ENCODE measurements at regions of chr13 and their contacts with region 1.

Region 1: DNA sequence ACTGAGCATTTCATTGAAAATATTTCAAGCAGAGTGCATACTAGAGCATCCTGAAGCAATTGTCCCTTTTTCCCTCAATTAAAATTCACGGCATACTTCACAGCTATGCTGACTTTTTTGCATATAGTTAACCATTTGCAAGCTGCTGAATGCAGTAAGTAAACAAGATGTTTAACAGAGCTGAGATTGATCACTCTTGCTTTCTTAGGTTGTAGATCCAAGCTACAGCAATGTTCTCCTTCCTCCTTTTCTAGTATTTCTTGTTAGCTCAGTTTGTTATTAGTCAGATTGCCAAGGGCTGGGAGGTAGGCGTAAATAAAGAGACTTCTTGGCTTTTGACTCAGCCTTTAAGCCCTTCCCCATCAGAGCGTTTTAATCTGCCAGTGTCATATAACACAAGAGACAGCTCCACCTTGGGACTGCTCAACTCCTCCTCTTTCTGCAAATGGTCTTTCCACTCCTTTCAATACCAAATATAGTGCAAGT is at the start of gene SLITRK6:
- DNase-seq: peak; percentile 74
- H3K4me3 ChIP-seq: peak within 1 kb of the TSS; percentile 18 to 20
- H3K27ac ChIP-seq: no peak within 1 kb of the TSS
- H3K4me1 ChIP-seq: no peaks in the 10 kb centered on the region
- H3K27me3 ChIP-seq: no peaks in the 10 kb centered on the region
- CTCF ChIP-seq: peak in 2 of 4 experiments; percentile 20 to 41
- POLR2A ChIP-seq: no peak
- total RNA-seq, gene SLITRK6: 2.6 to 7.6 TPM

Region 2: DNA sequence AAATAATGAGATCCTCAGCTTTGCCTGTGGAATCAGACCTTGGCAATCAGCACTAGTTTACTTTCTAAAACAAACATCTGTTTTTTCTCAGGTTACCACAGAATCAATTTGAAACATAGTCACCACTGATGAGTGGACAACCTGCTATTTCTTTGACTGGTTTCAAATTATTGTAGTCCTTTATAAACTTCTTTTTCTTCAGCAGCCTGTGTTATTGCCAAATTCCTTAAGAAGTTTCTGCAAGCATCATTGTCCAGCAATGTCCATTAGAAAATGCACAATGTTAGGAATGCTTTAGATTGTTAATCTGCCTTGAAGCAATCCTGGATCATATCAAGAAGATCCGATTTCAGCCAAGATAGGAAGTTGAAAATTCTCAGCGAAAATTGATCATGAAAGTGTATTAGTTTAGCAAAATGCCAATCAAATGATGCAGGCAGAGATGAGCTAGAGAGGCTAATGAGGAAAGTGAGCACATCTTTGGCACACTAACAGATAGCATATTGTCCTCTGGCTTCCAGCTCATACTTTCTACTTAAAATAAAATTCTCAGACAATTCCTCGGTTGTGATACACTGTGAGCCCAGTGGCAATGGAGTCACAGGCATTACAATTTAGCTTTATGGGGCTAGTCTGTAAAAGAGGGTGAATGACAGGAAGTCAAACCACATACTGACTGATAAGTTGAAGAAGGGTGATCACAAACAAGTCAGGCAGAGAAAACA is 270.5 kb before region 1 on chr13:
- intact Hi-C with region 1: loop called (anchors 10 kb)
- DNase-seq: no peak
- H3K4me3 ChIP-seq: no peak overlapping the region
- H3K27ac ChIP-seq: no peak overlapping the region
- H3K4me1 ChIP-seq: no peaks in the 10 kb centered on the region
- H3K27me3 ChIP-seq: no peaks in the 10 kb centered on the region
- CTCF ChIP-seq: no peak
- POLR2A ChIP-seq: no peak

Region 3: DNA sequence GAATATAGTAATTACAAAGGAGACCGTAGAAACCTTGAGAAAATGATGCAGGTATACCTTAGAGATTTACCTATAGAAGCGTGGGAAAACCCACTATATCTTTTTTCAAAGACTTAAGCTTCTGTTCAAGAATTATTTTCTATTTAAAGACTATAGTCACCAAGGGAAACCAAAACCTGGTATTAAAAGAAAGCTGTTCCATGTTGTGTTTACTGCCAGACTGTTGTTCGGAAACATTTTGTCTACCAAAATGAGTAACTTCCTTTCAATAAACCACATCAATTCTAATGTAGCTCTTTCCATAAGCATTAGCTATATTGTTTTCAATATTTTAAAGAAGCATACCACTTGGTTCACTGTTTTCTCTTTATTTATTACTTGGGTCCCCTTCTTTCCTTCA is 183.0 kb after region 1 on chr13:
- intact Hi-C with region 1: no loop called
- DNase-seq: no peak
- H3K4me3 ChIP-seq: no peak overlapping the region
- H3K27ac ChIP-seq: no peak overlapping the region
- H3K4me1 ChIP-seq: no peaks in the 10 kb centered on the region
- H3K27me3 ChIP-seq: no peaks in the 10 kb centered on the region
- CTCF ChIP-seq: no peak
- POLR2A ChIP-seq: no peak

Region 4: GRCh38 chr13:86038490-86038889 is 239.3 kb after region 1 on chr13:
- intact Hi-C with region 1: no loop called
- DNase-seq: no peak
- H3K4me3 ChIP-seq: no peak overlapping the region
- H3K27ac ChIP-seq: no peak overlapping the region
- H3K4me1 ChIP-seq: no peaks in the 10 kb centered on the region
- H3K27me3 ChIP-seq: no peaks in the 10 kb centered on the region
- CTCF ChIP-seq: no peak
- POLR2A ChIP-seq: no peak